Esophagus squamous epithelium (tissue), 5 donors: ENCODE measurements at regions of chr1 and their contacts with region 1.

Region 1: GRCh38 chr1:75208862-75209261 is 74.7 kb downstream of the LHX8 start:
- DNase-seq: no peak
- H3K4me3 ChIP-seq: no peak overlapping the region
- H3K27ac ChIP-seq: no peak overlapping the region
- H3K4me1 ChIP-seq: no peaks in the 10 kb centered on the region
- H3K27me3 ChIP-seq: no peaks in the 10 kb centered on the region
- CTCF ChIP-seq: no peak
- POLR2A ChIP-seq: no peak

Region 2: DNA sequence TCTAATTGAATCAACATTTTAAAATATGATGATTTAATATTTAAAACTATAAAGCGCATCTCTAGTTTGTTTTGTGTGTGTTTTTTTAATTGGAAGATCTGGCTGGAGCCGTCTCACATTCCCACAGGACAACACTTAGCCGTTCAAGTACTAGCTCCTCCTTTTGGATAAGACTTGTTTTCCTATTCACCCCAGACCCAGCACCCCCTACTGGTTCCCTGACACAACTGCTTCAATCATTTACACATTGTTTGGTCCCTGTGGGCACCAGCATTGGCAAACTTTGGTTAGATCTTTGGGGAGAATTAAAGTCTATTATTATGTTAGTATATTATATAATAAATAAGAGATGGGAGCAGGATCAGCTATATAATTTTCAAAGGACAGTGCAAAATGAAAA is 441.4 kb before region 1 on chr1:
- intact Hi-C with region 1: loop called (anchors 5 kb)
- DNase-seq: no peak
- H3K4me3 ChIP-seq: no peak overlapping the region
- H3K27ac ChIP-seq: no peak overlapping the region
- H3K4me1 ChIP-seq: no peaks in the 10 kb centered on the region
- H3K27me3 ChIP-seq: no peaks in the 10 kb centered on the region
- CTCF ChIP-seq: peak in 1 of 6 experiments; percentile 31
- POLR2A ChIP-seq: no peak